ENCODE measurements at regions of chr11 and their contacts with region 1.

Region 1: GRCh38 chr11:125887373-125888324 is at the start of gene HYLS1:
- DNase-seq: peak; percentile 100
- H3K4me3 Mint-ChIP-seq: peak within 1 kb of the TSS; percentile 89
- H3K27ac Mint-ChIP-seq: peak within 1 kb of the TSS; percentile 97
- H3K4me1 Mint-ChIP-seq: peaks cover 34% of the 10 kb centered on the region
- H3K27me3 Mint-ChIP-seq: peaks cover 4% of the 10 kb centered on the region
- total RNA-seq, gene HYLS1: 6.7 and 7.6 TPM in 2 replicates

Region 2: GRCh38 chr11:125514336-125515101 is 373.1 kb before region 1 on chr11:
- intact Hi-C with region 1: loop called (anchors 5 kb)
- DNase-seq: peak; percentile 85
- H3K4me3 Mint-ChIP-seq: peak overlapping the region; percentile 29
- H3K27ac Mint-ChIP-seq: peak overlapping the region; percentile 88
- H3K4me1 Mint-ChIP-seq: peaks cover 36% of the 10 kb centered on the region
- H3K27me3 Mint-ChIP-seq: no peaks in the 10 kb centered on the region

Region 3: DNA sequence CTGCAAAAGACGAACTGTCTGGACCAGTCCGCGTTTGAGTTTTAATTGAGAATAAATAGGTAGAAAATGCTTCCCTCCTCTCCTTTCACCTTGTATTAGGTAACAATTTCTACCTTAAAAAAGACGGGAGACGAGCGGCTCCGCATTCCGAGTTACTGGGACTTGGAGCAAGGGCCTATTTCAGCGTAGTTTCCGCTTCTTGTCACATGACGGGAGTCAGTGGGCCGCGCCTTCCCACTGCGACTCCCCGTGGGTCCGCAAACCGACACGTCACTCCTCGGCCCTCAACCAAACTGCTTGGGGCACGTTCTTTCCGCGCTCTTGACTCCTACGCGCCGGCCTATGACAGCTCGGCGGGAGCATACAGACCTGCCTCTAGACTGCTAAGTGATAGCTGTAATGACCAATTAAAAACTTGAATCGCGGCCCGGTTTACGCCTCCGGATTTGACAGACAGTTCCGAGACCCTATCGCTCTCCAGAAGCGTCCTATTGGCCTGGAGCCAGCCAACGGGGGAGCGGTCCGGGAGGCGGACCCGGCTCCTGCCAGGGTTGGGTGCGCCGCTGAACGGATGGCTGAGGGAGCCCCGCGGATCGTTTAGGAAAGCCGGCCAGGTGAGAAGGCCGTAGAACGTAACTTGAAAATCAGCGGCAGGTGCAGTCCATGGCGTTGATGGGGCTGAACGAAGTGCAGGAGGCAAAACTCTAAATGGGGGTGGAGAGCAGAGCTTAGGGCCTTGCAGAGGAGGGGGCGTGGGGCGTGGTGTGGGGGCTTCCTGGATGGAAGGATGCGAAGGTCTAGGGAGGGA is 295.1 kb before region 1 on chr11 and contains the start of gene STT3A:
- intact Hi-C with region 1: loop called (anchors 1 kb)
- DNase-seq: peak; percentile 99
- H3K4me3 Mint-ChIP-seq: peak within 1 kb of the TSS; percentile 98
- H3K27ac Mint-ChIP-seq: peak within 1 kb of the TSS; percentile 95
- H3K4me1 Mint-ChIP-seq: peaks cover 37% of the 10 kb centered on the region
- H3K27me3 Mint-ChIP-seq: no peaks in the 10 kb centered on the region
- total RNA-seq, gene STT3A: 167 and 183 TPM in 2 replicates

Region 4: DNA sequence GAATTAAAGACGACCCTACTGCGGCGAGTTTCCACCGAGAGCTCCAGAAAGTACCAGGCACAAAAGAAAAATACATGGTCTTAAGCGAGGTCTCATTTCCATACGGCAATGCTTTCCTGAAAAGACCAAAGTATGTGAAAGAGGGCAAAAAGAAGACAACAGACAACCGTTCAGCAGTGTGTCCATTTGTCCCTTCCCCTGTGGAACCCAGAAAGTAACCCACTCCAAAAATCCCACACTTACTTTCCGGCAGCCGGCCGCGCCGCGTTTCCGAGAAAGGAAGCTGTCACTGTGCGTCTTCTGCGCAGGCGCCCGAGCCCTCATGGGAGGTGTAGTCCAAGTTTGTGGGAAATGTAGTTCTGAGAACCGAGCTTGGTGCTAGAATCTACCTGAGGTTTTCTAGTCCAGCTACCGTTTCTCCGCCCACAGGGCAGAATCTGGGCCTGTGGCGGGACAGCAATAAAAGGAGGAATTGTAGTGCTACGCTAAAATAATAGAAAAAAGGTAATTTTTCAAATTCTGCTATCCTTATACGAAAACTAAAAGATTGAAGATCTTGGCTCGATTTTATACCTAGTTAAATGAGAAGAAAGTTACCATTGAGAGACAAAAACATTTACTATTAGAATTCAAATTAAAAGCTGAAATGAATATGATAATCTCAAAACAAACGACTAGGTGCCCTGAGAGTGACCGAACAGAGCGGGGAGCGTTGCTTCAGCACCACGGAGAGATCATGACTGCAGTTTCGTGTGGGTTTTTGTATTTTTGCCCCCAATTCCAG is 15.5 kb after region 1 on chr11 and contains the start of gene PUS3:
- intact Hi-C with region 1: loop called (anchors 1 kb)
- DNase-seq: peak; percentile 97
- H3K4me3 Mint-ChIP-seq: peak within 1 kb of the TSS; percentile 95
- H3K27ac Mint-ChIP-seq: peak within 1 kb of the TSS; percentile 94
- H3K4me1 Mint-ChIP-seq: peaks cover 28% of the 10 kb centered on the region
- H3K27me3 Mint-ChIP-seq: peaks cover 29% of the 10 kb centered on the region
- total RNA-seq, gene PUS3: 18.0 and 19.2 TPM in 2 replicates

Region 5: DNA sequence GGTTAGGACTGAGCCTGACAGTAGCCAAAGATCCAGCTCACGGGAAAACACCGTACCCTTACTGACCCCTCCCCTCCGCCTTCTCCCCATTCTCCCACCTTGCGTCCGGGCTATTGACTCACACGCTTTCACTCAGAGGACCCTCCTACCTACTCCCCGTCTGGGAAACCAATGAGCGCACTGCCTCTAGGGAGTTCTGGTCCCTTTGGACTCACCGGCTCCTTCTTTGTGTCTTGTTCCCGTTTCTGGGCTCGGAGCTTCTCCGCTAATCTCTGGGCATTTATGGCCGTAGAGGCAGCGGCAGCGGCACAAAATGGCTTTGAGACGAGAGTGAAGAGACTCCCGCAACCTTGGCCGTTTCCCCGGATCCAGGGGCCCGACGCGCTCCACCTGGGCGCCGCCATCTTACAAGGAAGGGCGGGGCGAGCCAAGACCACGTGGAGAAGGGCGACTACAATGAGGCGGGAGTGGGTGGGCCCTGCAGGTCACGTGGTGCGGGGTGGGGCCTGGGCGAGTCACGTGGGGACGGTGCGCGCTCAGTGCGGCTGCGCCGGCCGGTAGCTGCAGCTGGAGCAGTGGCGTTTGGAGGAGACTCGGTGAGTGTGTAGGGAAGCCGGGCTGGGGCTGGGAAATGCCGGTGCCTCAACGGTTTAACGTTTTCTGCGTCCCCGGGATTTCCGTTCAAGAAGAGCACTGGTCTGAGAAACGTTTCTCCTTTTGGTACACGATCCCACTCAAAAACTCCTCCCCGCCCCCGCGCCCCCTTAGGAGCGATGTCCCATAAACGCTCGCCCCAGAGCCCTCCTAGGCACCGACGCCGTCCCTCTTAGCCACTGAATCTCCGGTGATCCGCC is 323.8 kb after region 1 on chr11 and contains the starts of genes FAM118B and RPUSD4:
- intact Hi-C with region 1: loop called (anchors 1 kb)
- DNase-seq: peak; percentile 100
- H3K4me3 Mint-ChIP-seq: peak within 1 kb of the TSS; percentile 100
- H3K27ac Mint-ChIP-seq: peak within 1 kb of the TSS; percentile 97
- H3K4me1 Mint-ChIP-seq: peaks cover 32% of the 10 kb centered on the region
- H3K27me3 Mint-ChIP-seq: peaks cover 7% of the 10 kb centered on the region
- total RNA-seq, gene FAM118B: 12.8 and 14.2 TPM in 2 replicates
- total RNA-seq, gene RPUSD4: 48.6 and 51.1 TPM in 2 replicates